ENCODE measurements at regions of chr4 and their contacts with region 1.

Region 1: GRCh38 chr4:139108567-139109128 is 68.4 kb downstream of the ELF2 start:
- DNase-seq: no peak
- ATAC-seq: no peak
- H3K4me3 ChIP-seq: no peak overlapping the region
- H3K27ac ChIP-seq: no peak overlapping the region
- H3K4me1 ChIP-seq: no peaks in the 10 kb centered on the region
- H3K27me3 ChIP-seq: no peaks in the 10 kb centered on the region
- CTCF ChIP-seq: no peak
- EP300 ChIP-seq: no peak
- POLR2A ChIP-seq: no peak
- RAD21 ChIP-seq: no peak

Region 2: GRCh38 chr4:139167774-139168444 is 59.3 kb after region 1 on chr4:
- CTCF ChIA-PET with region 1: no interaction called
- POLR2A ChIA-PET with region 1: no interaction called
- in situ Hi-C with region 1: loop called (anchors 10 kb)
- intact Hi-C with region 1: no loop called
- DNase-seq: peak; percentile 62
- ATAC-seq: peak; percentile 91
- H3K4me3 ChIP-seq: no peak overlapping the region
- H3K27ac ChIP-seq: no peak overlapping the region
- H3K4me1 ChIP-seq: peaks cover 33% of the 10 kb centered on the region
- H3K27me3 ChIP-seq: no peaks in the 10 kb centered on the region
- CTCF ChIP-seq: peak; percentile 55
- EP300 ChIP-seq: no peak
- POLR2A ChIP-seq: no peak
- RAD21 ChIP-seq: peak; percentile 49; the same call in 1 of the 2 replicates